Activated B cell treated with CpG ODN at 0.5 μM for 24 hours (primary cell): ENCODE measurements at regions of chr17 and their contacts with region 1.

Region 1: DNA sequence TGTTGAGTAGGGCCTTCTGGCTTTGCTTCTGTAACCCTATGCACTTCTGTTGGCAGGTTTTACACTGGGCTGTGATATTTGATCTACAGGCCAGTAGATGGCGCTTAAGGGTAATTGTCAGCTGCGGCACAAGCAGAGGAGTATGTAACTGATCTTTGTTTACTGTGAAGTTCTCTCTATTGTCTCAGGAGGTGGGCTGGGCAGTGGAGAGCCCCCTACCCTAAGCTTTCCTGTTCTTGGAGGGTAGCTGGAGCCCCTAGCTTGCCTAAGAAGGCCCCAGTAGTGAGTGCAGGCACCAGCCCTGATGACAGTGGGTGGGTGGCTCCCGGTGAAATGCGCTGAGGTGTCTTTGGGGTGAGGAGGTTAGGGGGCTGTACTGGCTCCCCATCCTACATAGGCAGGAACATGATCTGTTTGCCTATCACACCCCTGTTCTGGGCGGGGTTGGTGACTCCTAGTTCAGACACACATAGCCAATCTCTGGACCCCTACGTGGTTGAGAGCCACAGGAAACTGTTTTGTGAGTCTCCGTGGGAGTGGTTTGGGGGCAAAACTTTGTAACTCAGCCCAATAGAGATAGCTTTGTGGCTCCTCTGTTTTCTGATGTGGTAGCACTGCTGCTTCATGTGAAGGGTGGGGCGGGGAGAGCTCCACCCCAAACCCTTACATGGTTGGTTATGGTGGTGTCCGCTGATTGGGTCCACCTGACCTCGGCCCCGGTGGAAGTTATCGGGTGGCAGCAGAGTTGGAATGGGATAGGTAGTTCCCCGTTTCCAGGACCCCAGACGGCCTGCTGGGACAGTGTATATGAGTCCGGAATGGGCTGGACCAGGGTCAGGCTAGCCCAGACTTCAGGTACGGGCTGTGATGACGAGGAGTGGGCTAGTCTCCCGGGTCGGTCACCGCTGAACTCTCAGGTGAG is 60.4 kb downstream of the SLFN11 start:
- DNase-seq: peak; percentile 53
- ATAC-seq: peak; percentile 87
- H3K4me3 Mint-ChIP-seq: peak overlapping the region; percentile 87
- H3K27ac Mint-ChIP-seq: peak overlapping the region; percentile 81
- H3K4me1 Mint-ChIP-seq: peaks cover 18% of the 10 kb centered on the region
- H3K27me3 Mint-ChIP-seq: no peaks in the 10 kb centered on the region
- CTCF ChIP-seq: peak; percentile 62

Region 2: DNA sequence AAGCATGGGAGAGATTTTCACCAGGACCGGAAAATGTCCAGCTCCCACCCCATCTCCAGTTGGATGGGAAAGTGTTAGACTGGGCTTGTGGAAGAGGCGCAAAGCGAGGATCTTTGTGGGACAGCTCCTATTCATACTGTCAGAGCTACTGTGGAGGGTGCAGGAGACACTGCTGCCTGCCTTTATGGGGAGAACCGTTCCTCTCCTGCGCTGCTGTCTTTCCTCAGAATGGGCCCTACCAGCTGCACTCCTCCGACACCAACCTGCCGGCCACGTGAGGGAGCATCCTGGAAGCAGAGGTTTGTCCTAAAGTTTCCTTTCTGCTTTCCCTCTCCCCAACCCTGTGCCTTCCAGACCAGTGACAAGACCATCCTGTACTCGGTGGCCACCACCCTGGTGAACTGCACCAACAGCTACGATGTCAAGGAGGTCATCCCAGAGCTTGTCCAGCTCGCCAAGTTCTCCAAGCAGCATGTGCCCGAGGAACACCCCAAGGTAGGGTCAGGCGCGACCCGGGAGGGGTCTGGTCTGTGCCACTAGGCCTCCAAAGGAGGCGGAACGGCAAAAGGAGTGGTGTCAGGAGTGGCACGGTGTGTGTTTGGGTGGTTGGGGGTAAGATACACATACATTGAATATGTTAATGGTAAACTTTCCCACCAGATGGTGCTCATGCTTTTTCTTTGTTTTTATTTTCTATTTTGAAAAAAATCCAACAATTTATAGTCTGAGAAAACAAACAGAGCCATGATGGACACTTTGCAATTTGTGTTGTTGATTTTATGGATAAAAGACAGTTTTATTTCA is 141.9 kb before region 1 on chr17:
- CTCF ChIA-PET with region 1: interaction called, 4 read pairs
- POLR2A ChIA-PET with region 1: no interaction called
- intact Hi-C with region 1: loop called (anchors 2 kb)
- DNase-seq: no peak
- ATAC-seq: no peak
- H3K4me3 Mint-ChIP-seq: no peak overlapping the region
- H3K27ac Mint-ChIP-seq: no peak overlapping the region
- H3K4me1 Mint-ChIP-seq: no peaks in the 10 kb centered on the region
- H3K27me3 Mint-ChIP-seq: peaks cover 16% of the 10 kb centered on the region
- CTCF ChIP-seq: no peak

Region 3: GRCh38 chr17:35345926-35346771 is 33.1 kb after region 1 on chr17:
- CTCF ChIA-PET with region 1: interaction called, 4 read pairs
- POLR2A ChIA-PET with region 1: no interaction called
- intact Hi-C with region 1: loop called (anchors 1 kb)
- DNase-seq: no peak
- ATAC-seq: peak; percentile 74
- H3K4me3 Mint-ChIP-seq: peak overlapping the region; percentile 86
- H3K27ac Mint-ChIP-seq: peak overlapping the region; percentile 79
- H3K4me1 Mint-ChIP-seq: peaks cover 40% of the 10 kb centered on the region
- H3K27me3 Mint-ChIP-seq: no peaks in the 10 kb centered on the region
- CTCF ChIP-seq: no peak

Region 4: DNA sequence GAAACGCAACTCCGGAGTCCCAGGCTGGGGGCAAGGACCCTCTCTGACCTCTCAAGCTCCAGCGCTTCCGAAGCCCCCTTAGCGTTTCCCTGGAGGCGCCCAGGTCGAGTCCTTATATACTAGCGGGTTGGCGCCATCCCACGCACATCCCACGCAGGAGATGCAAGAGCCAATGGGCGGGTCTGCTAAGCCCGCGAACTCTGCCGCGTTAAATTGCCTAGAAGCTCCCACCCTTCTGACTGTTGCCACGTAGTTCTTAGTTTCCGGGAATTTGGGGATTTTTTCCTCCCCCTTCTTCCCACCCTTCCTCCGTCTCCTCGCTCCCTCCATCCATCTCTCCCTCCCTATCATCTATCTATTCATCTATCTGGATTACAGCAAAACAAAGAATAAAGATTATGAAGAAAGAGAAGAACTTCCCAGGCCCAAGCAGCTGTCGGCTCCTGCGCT is 60.5 kb after region 1 on chr17 and contains the start of gene SLFN11:
- CTCF ChIA-PET with region 1: interaction called, 4 read pairs
- POLR2A ChIA-PET with region 1: interaction called, 5 read pairs
- intact Hi-C with region 1: loop called (anchors 2 kb)
- DNase-seq: peak; percentile 55
- ATAC-seq: peak; percentile 76
- H3K4me3 Mint-ChIP-seq: peak within 1 kb of the TSS; percentile 99
- H3K27ac Mint-ChIP-seq: peak within 1 kb of the TSS; percentile 98
- H3K4me1 Mint-ChIP-seq: peaks cover 50% of the 10 kb centered on the region
- H3K27me3 Mint-ChIP-seq: no peaks in the 10 kb centered on the region
- CTCF ChIP-seq: no peak
- total RNA-seq, gene SLFN11: 19.2 and 22.4 TPM in 2 replicates

Region 5: DNA sequence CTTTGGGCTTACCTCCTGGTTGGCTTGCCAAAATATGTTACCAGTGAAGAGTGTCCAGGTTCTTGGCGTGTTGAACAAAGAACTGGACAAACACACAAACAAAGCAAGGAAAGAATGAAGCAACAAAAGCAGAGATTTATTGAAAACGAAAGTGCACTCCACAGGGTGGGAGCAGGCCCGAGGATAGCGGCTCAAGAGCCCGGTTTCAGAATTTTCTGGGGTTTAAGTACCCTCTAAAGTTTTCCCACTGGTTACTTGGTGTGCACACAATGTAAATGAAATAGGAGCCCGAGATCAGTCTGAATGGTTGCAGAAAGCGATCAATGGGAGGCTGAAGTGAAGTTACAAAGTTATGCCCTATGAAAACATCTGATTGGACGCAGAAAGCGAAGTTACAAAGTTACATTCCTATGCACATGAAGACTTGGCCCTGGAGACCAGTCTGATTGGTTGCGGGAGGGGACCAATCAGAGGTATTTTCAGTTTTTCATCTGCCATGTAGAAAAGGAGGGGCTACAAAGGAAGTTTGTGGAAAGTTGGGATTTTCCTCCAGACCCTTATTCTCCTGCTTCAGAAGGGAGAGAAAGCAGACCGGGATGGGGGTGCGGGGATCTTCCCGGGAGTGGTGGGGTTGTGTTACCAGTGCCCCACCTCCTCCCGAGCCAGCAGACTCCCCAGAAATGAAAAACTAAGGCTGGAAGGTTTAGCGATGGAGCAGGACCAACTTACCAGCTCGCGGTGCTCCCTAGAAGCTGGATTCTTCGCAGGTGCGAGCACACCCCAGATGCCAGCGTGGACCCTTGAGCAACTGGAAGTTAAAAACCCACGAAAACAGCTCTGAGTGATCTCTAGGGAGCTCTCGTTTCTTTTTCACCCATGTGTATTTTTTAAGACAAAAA is 119.4 kb after region 1 on chr17 and contains the start of gene SLFN12:
- CTCF ChIA-PET with region 1: interaction called, 6 read pairs
- POLR2A ChIA-PET with region 1: no interaction called
- intact Hi-C with region 1: loop called (anchors 1 kb)
- DNase-seq: peak; percentile 29
- ATAC-seq: peak; percentile 93
- H3K4me3 Mint-ChIP-seq: peak within 1 kb of the TSS; percentile 97
- H3K27ac Mint-ChIP-seq: peak within 1 kb of the TSS; percentile 92
- H3K4me1 Mint-ChIP-seq: peaks cover 31% of the 10 kb centered on the region
- H3K27me3 Mint-ChIP-seq: no peaks in the 10 kb centered on the region
- CTCF ChIP-seq: no peak
- total RNA-seq, gene SLFN12: 8.7 and 9.0 TPM in 2 replicates

Region 6: DNA sequence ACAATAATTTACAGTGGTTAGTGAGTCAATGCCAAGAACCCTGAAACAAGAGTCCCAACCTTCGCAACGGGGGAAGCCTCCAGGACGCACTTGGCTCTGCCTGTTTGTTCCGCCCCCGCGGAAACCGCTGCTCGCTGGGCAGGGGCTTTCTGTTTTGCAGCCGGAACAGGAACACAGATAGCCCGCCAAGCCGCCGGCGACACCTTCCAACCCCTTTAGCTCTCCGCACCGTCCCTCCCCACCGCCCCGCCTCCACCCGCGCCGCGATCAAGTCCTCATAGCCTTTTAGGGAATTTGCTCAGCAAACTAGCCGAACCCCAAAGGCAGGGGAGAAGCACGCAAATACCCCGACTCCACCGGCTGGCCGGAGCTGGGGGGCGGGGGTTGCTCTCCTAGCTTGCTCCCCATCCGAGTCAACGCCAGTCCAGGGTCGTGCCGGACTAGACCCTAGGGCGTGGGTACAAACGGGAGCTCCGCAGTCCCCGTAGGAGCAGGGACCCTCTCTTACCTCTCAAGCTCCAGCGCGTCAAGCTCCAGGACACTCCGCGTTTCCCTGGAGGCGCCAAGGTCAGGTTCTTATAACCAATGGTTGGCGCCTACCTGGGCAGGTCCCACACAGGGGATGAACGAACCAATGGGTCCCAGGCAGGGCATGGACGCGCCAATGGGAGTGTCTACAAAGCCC is 135.3 kb after region 1 on chr17 and contains the start of gene SLFN13:
- CTCF ChIA-PET with region 1: interaction called, 8 read pairs
- POLR2A ChIA-PET with region 1: interaction called, 9 read pairs
- intact Hi-C with region 1: loop called (anchors 1 kb)
- DNase-seq: peak; percentile 69
- ATAC-seq: peak; percentile 87
- H3K4me3 Mint-ChIP-seq: peak within 1 kb of the TSS; percentile 89
- H3K27ac Mint-ChIP-seq: peak within 1 kb of the TSS; percentile 84
- H3K4me1 Mint-ChIP-seq: peaks cover 23% of the 10 kb centered on the region
- H3K27me3 Mint-ChIP-seq: no peaks in the 10 kb centered on the region
- CTCF ChIP-seq: no peak
- total RNA-seq, gene SLFN13: 14.8 and 15.3 TPM in 2 replicates

Region 7: DNA sequence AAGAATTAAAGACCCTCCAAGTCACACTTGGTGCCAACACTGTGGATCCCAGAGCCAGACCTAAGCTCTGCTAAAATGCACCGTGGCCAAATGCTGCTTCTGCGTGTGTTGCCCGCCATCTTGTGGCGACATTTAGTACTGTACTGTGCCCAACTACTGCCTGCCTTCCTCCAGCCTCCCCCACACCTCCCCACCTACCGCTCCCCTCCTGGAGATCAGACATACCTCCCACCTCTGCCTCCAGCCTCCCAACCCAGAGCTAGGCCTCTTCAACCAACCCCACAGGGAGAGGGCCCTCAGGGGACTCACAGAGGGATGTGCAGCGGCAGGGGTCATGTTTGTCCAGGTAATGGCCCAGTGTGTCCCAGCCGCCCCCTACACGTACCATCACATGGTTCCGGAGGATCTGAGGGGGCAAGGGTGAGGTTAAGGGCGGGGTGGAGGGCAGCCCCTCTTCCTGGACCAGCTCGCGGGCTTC is 434.5 kb after region 1 on chr17:
- CTCF ChIA-PET with region 1: interaction called, 6 read pairs
- POLR2A ChIA-PET with region 1: no interaction called
- intact Hi-C with region 1: loop called (anchors 1 kb)
- DNase-seq: peak; percentile 64
- ATAC-seq: peak; percentile 97
- H3K4me3 Mint-ChIP-seq: no peak overlapping the region
- H3K27ac Mint-ChIP-seq: no peak overlapping the region
- H3K4me1 Mint-ChIP-seq: peaks cover 6% of the 10 kb centered on the region
- H3K27me3 Mint-ChIP-seq: peaks cover 35% of the 10 kb centered on the region
- CTCF ChIP-seq: no peak